B cell (primary cell): ENCODE measurements at regions of chr13 and their contacts with region 1.

Region 1: DNA sequence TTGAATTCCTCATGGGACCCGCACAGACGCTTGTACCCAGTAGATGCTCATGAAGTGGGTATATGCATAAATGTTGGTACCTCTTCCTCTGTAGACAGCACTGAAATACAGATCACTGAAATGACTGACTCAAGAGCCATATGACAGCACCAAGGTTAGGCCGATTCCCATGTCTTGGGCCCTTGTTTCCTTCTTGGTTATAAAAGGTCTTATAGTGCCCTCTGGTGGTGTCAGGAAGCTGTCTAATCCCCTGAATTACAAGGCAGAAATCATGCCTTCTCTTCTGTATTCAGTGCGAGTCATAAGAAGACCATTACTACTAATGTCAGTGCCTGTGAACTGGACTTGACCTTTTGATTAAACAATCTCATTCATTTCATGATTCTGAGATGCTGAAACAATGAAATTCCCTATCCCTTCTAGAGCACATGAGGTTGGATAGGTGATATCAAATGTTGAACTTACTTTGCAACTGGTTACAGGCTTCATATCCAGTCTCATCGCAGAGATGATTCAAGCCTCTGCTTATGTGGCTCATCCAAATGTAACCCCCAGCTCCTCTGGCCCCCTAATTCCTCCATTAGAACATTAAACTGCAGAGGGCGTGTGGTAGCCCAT is 59.7 kb downstream of the SPATA13 start:
- DNase-seq: peak; percentile 81
- ATAC-seq: peak; percentile 64
- H3K4me3 ChIP-seq: no peak overlapping the region
- H3K4me3 Mint-ChIP-seq: no peak overlapping the region
- H3K27ac ChIP-seq: no peak overlapping the region
- H3K27ac Mint-ChIP-seq: no peak overlapping the region
- H3K4me1 ChIP-seq: peaks cover 34 to 47% of the 10 kb centered on the region in 2 donors
- H3K4me1 Mint-ChIP-seq: peaks cover 49% of the 10 kb centered on the region
- H3K27me3 ChIP-seq: no peaks in the 10 kb centered on the region
- H3K27me3 Mint-ChIP-seq: no peaks in the 10 kb centered on the region
- CTCF ChIP-seq: peak; percentile 87

Region 2: GRCh38 chr13:23466144-23467002 is 753.8 kb before region 1 on chr13:
- CTCF ChIA-PET with region 1: interaction called, 7 read pairs
- POLR2A ChIA-PET with region 1: no interaction called
- intact Hi-C with region 1: loop called (anchors 1 kb)
- DNase-seq: peak; percentile 77
- ATAC-seq: peak; percentile 89
- H3K4me3 ChIP-seq: peak overlapping the region; percentile 42 to 70 (median 53)
- H3K4me3 Mint-ChIP-seq: peak overlapping the region; percentile 87
- H3K27ac ChIP-seq: no peak overlapping the region
- H3K27ac Mint-ChIP-seq: peak overlapping the region; percentile 46
- H3K4me1 ChIP-seq: peaks cover 4 to 12% of the 10 kb centered on the region in 2 donors
- H3K4me1 Mint-ChIP-seq: peaks cover 8% of the 10 kb centered on the region
- H3K27me3 ChIP-seq: peaks cover 0 to 27% (median 9%) of the 10 kb centered on the region in 4 experiments
- H3K27me3 Mint-ChIP-seq: peaks cover 58% of the 10 kb centered on the region
- CTCF ChIP-seq: peak; percentile 68

Region 3: GRCh38 chr13:23707674-23708073 is 512.5 kb before region 1 on chr13:
- CTCF ChIA-PET with region 1: no interaction called
- POLR2A ChIA-PET with region 1: no interaction called
- intact Hi-C with region 1: no loop called
- DNase-seq: no peak
- ATAC-seq: no peak
- H3K4me3 ChIP-seq: no peak overlapping the region
- H3K4me3 Mint-ChIP-seq: no peak overlapping the region
- H3K27ac ChIP-seq: no peak overlapping the region
- H3K27ac Mint-ChIP-seq: no peak overlapping the region
- H3K4me1 ChIP-seq: peaks cover 0 to 5% of the 10 kb centered on the region in 2 donors
- H3K4me1 Mint-ChIP-seq: peaks cover 3% of the 10 kb centered on the region
- H3K27me3 ChIP-seq: no peaks in the 10 kb centered on the region
- H3K27me3 Mint-ChIP-seq: peaks cover 3% of the 10 kb centered on the region
- CTCF ChIP-seq: no peak

Region 4: GRCh38 chr13:23888658-23889614 is 331.3 kb before region 1 on chr13 and contains the start of gene MIPEP:
- CTCF ChIA-PET with region 1: interaction called, 3 read pairs
- POLR2A ChIA-PET with region 1: no interaction called
- intact Hi-C with region 1: loop called (anchors 5 kb)
- DNase-seq: peak; percentile 92
- ATAC-seq: peak; percentile 93
- H3K4me3 ChIP-seq: peak within 1 kb of the TSS; percentile 24 to 96 (median 80)
- H3K4me3 Mint-ChIP-seq: peak within 1 kb of the TSS; percentile 94
- H3K27ac ChIP-seq: peak within 1 kb of the TSS; percentile 42 to 86
- H3K27ac Mint-ChIP-seq: peak within 1 kb of the TSS; percentile 95
- H3K4me1 ChIP-seq: peaks cover 12 to 17% of the 10 kb centered on the region in 2 donors
- H3K4me1 Mint-ChIP-seq: peaks cover 23% of the 10 kb centered on the region
- H3K27me3 ChIP-seq: no peaks in the 10 kb centered on the region
- H3K27me3 Mint-ChIP-seq: no peaks in the 10 kb centered on the region
- CTCF ChIP-seq: peak; percentile 69
- total RNA-seq, gene MIPEP: 15.7 and 16.9 TPM in 2 replicates

Region 5: DNA sequence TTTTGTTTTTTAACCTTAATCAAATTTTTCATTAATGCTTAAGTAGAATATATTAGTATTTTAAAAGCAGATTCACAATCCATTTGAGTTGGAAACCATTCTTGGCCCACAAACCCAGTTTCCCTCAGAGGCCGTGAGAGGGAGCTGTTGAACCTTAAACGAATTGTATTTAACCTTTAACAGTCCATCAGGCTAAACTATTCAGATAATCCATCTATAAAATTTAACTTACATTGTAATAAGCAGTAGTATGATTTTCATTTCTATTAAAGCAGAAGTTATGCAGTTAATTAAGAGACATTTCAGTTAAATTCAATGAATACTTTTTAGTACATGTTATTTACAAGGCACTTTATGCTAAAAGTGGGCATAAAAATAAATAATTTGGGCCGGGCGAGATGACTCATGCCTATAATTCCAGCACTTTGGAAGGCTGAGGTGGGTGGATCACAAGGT is 199.8 kb before region 1 on chr13:
- CTCF ChIA-PET with region 1: interaction called, 50 read pairs
- POLR2A ChIA-PET with region 1: no interaction called
- intact Hi-C with region 1: no loop called
- DNase-seq: peak; percentile 34
- ATAC-seq: no peak
- H3K4me3 ChIP-seq: no peak overlapping the region
- H3K4me3 Mint-ChIP-seq: no peak overlapping the region
- H3K27ac ChIP-seq: no peak overlapping the region
- H3K27ac Mint-ChIP-seq: no peak overlapping the region
- H3K4me1 ChIP-seq: no peaks in the 10 kb centered on the region
- H3K4me1 Mint-ChIP-seq: no peaks in the 10 kb centered on the region
- H3K27me3 ChIP-seq: no peaks in the 10 kb centered on the region
- H3K27me3 Mint-ChIP-seq: no peaks in the 10 kb centered on the region
- CTCF ChIP-seq: peak; percentile 67

Region 6: GRCh38 chr13:24053519-24054251 is 166.5 kb before region 1 on chr13:
- CTCF ChIA-PET with region 1: interaction called, 64 read pairs
- POLR2A ChIA-PET with region 1: no interaction called
- intact Hi-C with region 1: loop called (anchors 1 kb)
- DNase-seq: peak; percentile 78
- ATAC-seq: peak; percentile 97
- H3K4me3 ChIP-seq: no peak overlapping the region
- H3K4me3 Mint-ChIP-seq: no peak overlapping the region
- H3K27ac ChIP-seq: no peak overlapping the region
- H3K27ac Mint-ChIP-seq: peak overlapping the region; percentile 51
- H3K4me1 ChIP-seq: no peaks in the 10 kb centered on the region
- H3K4me1 Mint-ChIP-seq: peaks cover 10% of the 10 kb centered on the region
- H3K27me3 ChIP-seq: peaks cover 0 to 12% (median 2%) of the 10 kb centered on the region in 4 experiments
- H3K27me3 Mint-ChIP-seq: peaks cover 25% of the 10 kb centered on the region
- CTCF ChIP-seq: peak; percentile 67

Region 7: DNA sequence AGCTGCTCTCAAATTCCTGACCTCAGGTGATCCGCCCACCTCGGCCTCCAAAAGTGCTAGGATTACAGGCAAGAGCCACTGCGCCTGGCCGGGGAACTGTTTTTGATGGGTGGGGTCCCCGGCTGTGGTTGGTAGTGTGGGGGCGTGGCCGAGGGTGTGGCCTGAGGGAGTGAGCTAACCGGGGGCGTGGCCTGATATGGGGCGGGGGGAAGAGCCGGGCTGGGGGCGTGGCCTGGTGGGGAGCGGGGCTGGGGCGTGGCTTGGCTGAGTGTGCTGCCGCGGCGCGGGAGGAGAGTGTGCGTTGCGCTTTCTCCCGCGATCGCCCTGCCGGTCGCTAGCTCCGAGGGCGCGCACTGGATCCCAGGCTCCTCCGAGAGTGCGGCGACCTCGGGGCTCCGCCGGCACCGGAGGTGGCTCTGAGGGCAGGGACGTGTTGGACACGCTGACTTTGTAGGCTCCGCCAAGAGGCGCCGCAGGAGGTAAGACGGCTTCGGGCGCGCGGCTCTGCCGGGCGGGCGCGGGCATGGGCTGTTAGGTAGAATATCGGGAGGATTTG is 59.7 kb before region 1 on chr13 and contains the start of gene SPATA13:
- CTCF ChIA-PET with region 1: interaction called, 11 read pairs
- POLR2A ChIA-PET with region 1: no interaction called
- intact Hi-C with region 1: loop called (anchors 5 kb)
- DNase-seq: peak; percentile 92
- ATAC-seq: peak; percentile 95
- H3K4me3 ChIP-seq: peak within 1 kb of the TSS; percentile 6 to 80 (median 74)
- H3K4me3 Mint-ChIP-seq: peak within 1 kb of the TSS; percentile 87
- H3K27ac ChIP-seq: no peak within 1 kb of the TSS
- H3K27ac Mint-ChIP-seq: peak within 1 kb of the TSS; percentile 37
- H3K4me1 ChIP-seq: peaks cover 9 to 20% of the 10 kb centered on the region in 2 donors
- H3K4me1 Mint-ChIP-seq: peaks cover 18% of the 10 kb centered on the region
- H3K27me3 ChIP-seq: peaks cover 0 to 32% (median 11%) of the 10 kb centered on the region in 4 experiments
- H3K27me3 Mint-ChIP-seq: peaks cover 22% of the 10 kb centered on the region
- CTCF ChIP-seq: no peak
- total RNA-seq, gene SPATA13: 8.3 and 8.8 TPM in 2 replicates

Region 8: GRCh38 chr13:24261566-24261965 is 41.4 kb after region 1 on chr13:
- CTCF ChIA-PET with region 1: no interaction called
- POLR2A ChIA-PET with region 1: no interaction called
- intact Hi-C with region 1: loop called (anchors 2 kb)
- DNase-seq: no peak
- ATAC-seq: no peak
- H3K4me3 ChIP-seq: no peak overlapping the region
- H3K4me3 Mint-ChIP-seq: no peak overlapping the region
- H3K27ac ChIP-seq: no peak overlapping the region
- H3K27ac Mint-ChIP-seq: peak overlapping the region; percentile 34
- H3K4me1 ChIP-seq: peaks cover 9 to 12% of the 10 kb centered on the region in 2 donors
- H3K4me1 Mint-ChIP-seq: peaks cover 21% of the 10 kb centered on the region
- H3K27me3 ChIP-seq: no peaks in the 10 kb centered on the region
- H3K27me3 Mint-ChIP-seq: no peaks in the 10 kb centered on the region
- CTCF ChIP-seq: no peak

Region 9: DNA sequence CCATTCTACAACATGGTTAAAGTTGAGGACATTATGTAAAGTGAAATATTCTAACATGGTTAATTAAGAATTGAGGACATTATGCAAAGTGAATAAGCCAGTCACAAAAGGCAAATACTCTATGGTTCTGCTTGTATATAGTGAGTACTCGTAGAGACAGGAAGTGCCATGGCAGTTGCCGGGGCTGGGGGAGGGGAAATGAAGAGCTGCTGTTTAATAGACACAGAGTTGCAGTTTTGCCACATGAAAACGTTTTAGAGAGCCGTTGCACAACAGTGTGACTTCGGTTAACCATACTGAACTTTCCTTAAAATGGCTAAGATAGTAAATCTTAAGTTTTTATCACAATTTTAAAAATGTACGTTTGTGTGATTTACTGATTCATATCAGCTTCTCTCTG is 1654.7 kb after region 1 on chr13:
- CTCF ChIA-PET with region 1: no interaction called
- POLR2A ChIA-PET with region 1: no interaction called
- intact Hi-C with region 1: no loop called
- DNase-seq: no peak
- ATAC-seq: no peak
- H3K4me3 ChIP-seq: no peak overlapping the region
- H3K4me3 Mint-ChIP-seq: no peak overlapping the region
- H3K27ac ChIP-seq: no peak overlapping the region
- H3K27ac Mint-ChIP-seq: no peak overlapping the region
- H3K4me1 ChIP-seq: no peaks in the 10 kb centered on the region
- H3K4me1 Mint-ChIP-seq: peaks cover 3% of the 10 kb centered on the region
- H3K27me3 ChIP-seq: no peaks in the 10 kb centered on the region
- H3K27me3 Mint-ChIP-seq: peaks cover under 1% of the 10 kb centered on the region
- CTCF ChIP-seq: no peak